ENCODE measurements at regions of chr3 and their contacts with region 1.

Region 1: GRCh38 chr3:50600841-50601591 is 10.6 kb downstream of the CISH start:
- DNase-seq: peak; percentile 91
- H3K4me3 Mint-ChIP-seq: peak overlapping the region; percentile 59
- H3K27ac Mint-ChIP-seq: peak overlapping the region; percentile 88
- H3K4me1 Mint-ChIP-seq: peaks cover 46% of the 10 kb centered on the region
- H3K27me3 Mint-ChIP-seq: no peaks in the 10 kb centered on the region
- CTCF ChIP-seq: no peak

Region 2: DNA sequence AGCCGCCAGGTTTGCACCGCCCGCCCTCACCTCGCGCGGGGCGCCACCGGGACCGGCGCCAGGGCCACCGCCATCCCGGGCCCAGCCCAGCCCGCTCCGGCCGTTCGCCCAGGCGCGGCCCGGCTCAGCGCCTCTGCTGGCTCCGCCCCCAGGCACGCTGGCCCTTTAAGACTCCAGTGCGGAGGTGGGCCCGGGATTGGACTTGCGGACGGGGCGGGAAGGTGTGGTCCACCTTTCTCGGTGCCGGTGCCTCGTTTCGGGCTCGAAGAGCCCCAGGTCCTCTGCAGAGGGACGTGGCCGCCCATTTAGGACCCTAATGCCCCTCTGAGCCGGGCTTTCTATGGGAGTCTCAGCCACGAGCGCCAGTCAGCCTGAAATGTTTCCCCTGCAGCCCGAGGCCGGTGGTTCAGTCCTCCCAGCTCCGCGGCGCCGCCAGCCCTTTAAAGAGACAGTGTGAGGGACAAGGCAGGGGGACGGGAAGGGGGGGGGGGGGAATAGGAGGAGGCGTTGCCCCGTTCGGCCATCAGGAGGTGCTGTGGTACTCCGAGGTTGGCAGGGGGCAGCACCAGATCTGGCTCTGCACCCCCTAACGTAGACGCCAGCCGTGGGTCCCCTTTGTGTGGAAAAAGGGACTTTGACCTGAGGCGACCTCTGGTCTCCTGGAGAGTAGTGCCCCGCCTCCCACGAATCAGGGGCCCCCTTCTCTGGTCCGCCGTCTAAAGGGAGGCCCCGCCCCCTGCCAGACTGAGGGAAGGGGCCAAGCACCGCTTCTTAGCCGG is 279.5 kb before region 1 on chr3:
- CTCF ChIA-PET with region 1: no interaction called
- intact Hi-C with region 1: no loop called
- DNase-seq: peak; percentile 91
- H3K4me3 Mint-ChIP-seq: peak overlapping the region; percentile 74
- H3K27ac Mint-ChIP-seq: peak overlapping the region; percentile 94
- H3K4me1 Mint-ChIP-seq: peaks cover 6% of the 10 kb centered on the region
- H3K27me3 Mint-ChIP-seq: no peaks in the 10 kb centered on the region
- CTCF ChIP-seq: peak; percentile 12

Region 3: GRCh38 chr3:50450209-50450921 is 150.7 kb before region 1 on chr3:
- CTCF ChIA-PET with region 1: no interaction called
- intact Hi-C with region 1: no loop called
- DNase-seq: no peak
- H3K4me3 Mint-ChIP-seq: no peak overlapping the region
- H3K27ac Mint-ChIP-seq: no peak overlapping the region
- H3K4me1 Mint-ChIP-seq: no peaks in the 10 kb centered on the region
- H3K27me3 Mint-ChIP-seq: peaks cover 64% of the 10 kb centered on the region
- CTCF ChIP-seq: no peak

Region 4: GRCh38 chr3:50568947-50569749 is 31.9 kb before region 1 on chr3 and contains the start of gene HEMK1:
- CTCF ChIA-PET with region 1: no interaction called
- intact Hi-C with region 1: loop called (anchors 1 kb)
- DNase-seq: peak; percentile 98
- H3K4me3 Mint-ChIP-seq: peak within 1 kb of the TSS; percentile 86
- H3K27ac Mint-ChIP-seq: peak within 1 kb of the TSS; percentile 58
- H3K4me1 Mint-ChIP-seq: peaks cover 18% of the 10 kb centered on the region
- H3K27me3 Mint-ChIP-seq: peaks cover 37% of the 10 kb centered on the region
- CTCF ChIP-seq: no peak
- total RNA-seq, gene HEMK1: 17.6 and 20.0 TPM in 2 replicates

Measured in Calu3 (cell line).